AG04450 (cell line): ENCODE measurements at regions of chr22 and their contacts with region 1.

Region 1: DNA sequence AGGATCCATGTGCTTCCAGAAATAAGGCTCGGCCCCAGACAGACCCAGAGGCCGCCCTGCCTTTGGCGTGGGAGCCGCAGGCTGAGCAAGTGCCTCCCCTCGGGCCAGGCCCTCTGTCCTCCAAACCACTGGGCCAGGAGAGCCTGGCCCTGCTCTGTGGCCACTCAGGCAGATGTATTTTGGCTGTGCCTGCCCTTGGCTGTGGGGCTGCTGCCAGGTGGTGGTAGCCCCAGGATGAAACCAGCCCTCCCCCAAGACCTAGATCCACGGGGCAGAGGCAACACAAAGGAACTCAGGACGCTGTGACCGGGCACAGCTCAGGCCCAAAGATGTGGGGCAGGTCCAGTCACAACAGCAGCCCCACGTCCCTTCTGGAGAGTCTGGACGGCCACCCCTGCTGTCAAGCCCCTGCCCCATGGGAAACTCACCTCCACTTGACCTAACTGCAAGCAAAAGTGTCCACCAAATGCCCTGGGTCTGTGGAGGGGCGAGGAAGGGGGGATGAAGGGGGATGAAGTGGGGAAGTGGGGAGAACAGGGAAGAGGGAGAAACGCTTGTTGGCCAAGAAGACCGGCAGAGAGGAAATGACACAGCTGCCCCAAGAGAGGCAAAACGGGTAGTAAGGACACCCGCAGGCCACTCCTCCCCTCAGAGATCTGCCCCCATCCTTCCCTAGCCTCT is 23.9 kb downstream of the PISD start:
- DNase-seq: no peak
- H3K4me3 ChIP-seq: no peak overlapping the region
- H3K27ac ChIP-seq: peak overlapping the region; percentile 47
- H3K27me3 ChIP-seq: no peaks in the 10 kb centered on the region
- CTCF ChIP-seq: no peak

Region 2: GRCh38 chr22:31451709-31452571 is 186.1 kb before region 1 on chr22:
- CTCF ChIA-PET with region 1: interaction called, 10 read pairs
- POLR2A ChIA-PET with region 1: no interaction called
- DNase-seq: peak; percentile 1
- H3K4me3 ChIP-seq: no peak overlapping the region
- H3K27ac ChIP-seq: no peak overlapping the region
- H3K27me3 ChIP-seq: no peaks in the 10 kb centered on the region
- CTCF ChIP-seq: peak; percentile 63

Region 3: DNA sequence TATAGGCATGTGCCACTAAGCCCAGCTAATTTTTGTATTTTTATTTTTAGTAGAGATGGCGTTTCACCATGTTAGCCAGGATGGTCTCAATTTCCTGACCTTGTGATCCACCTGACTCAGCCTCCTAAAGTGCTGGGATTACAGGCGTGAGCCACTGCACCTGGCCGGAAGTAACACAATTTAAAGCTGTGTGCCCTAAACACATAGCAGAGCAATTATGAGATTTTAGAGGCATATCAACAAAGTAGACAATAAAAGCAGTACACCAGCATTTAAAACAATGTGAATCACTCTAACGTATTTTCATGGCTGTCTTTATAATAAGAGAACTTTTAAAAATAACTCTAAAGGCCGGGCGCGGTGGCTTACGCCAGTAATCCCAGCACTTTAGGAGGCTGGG is 69.4 kb after region 1 on chr22:
- CTCF ChIA-PET with region 1: no interaction called
- POLR2A ChIA-PET with region 1: no interaction called
- DNase-seq: no peak
- H3K4me3 ChIP-seq: no peak overlapping the region
- H3K27ac ChIP-seq: no peak overlapping the region
- H3K27me3 ChIP-seq: no peaks in the 10 kb centered on the region
- CTCF ChIP-seq: no peak